Caco-2 (cell line): ENCODE measurements at regions of chr10 and their contacts with region 1.

Region 1: GRCh38 chr10:22325272-22326144 is 4.6 kb downstream of the BMI1 start:
- DNase-seq: peak; percentile 79 to 89
- H3K4me3 ChIP-seq: peak overlapping the region; percentile 62
- H3K4me3 Mint-ChIP-seq: peak overlapping the region; percentile 71
- H3K27ac Mint-ChIP-seq: peak overlapping the region; percentile 63
- H3K4me1 ChIP-seq: peaks cover 36% of the 10 kb centered on the region
- H3K4me1 Mint-ChIP-seq: peaks cover 21% of the 10 kb centered on the region
- H3K27me3 ChIP-seq: no peaks in the 10 kb centered on the region
- H3K27me3 Mint-ChIP-seq: peaks cover 2% of the 10 kb centered on the region
- CTCF ChIP-seq: no peak

Region 2: GRCh38 chr10:22340362-22341189 is 15.1 kb after region 1 on chr10:
- CTCF ChIA-PET with region 1: no interaction called
- POLR2A ChIA-PET with region 1: interaction called, 6 read pairs
- intact Hi-C with region 1: loop called (anchors 1 kb)
- DNase-seq: peak; percentile 70 to 82
- H3K4me3 ChIP-seq: peak overlapping the region; percentile 74
- H3K4me3 Mint-ChIP-seq: peak overlapping the region; percentile 91
- H3K27ac Mint-ChIP-seq: peak overlapping the region; percentile 93
- H3K4me1 ChIP-seq: peaks cover 5% of the 10 kb centered on the region; the same call in 1 of the 2 replicates
- H3K4me1 Mint-ChIP-seq: peaks cover 7% of the 10 kb centered on the region
- H3K27me3 ChIP-seq: no peaks in the 10 kb centered on the region; the same call in 1 of the 2 replicates
- H3K27me3 Mint-ChIP-seq: peaks cover 5% of the 10 kb centered on the region
- CTCF ChIP-seq: no peak

Region 3: GRCh38 chr10:22560913-22561239 is 235.4 kb after region 1 on chr10:
- CTCF ChIA-PET with region 1: no interaction called
- POLR2A ChIA-PET with region 1: no interaction called
- intact Hi-C with region 1: loop called (anchors 10 kb)
- DNase-seq: no peak
- H3K4me3 ChIP-seq: no peak overlapping the region
- H3K4me3 Mint-ChIP-seq: no peak overlapping the region
- H3K27ac Mint-ChIP-seq: no peak overlapping the region
- H3K4me1 ChIP-seq: no peaks in the 10 kb centered on the region
- H3K4me1 Mint-ChIP-seq: no peaks in the 10 kb centered on the region
- H3K27me3 ChIP-seq: no peaks in the 10 kb centered on the region
- H3K27me3 Mint-ChIP-seq: no peaks in the 10 kb centered on the region
- CTCF ChIP-seq: no peak